ENCODE measurements at regions of chrX and their contacts with region 1.

Region 1: GRCh38 chrX:40108959-40109287 is 11.2 kb upstream of the BCOR start:
- DNase-seq: no peak
- ATAC-seq: peak; percentile 59
- H3K4me3 ChIP-seq: peak overlapping the region; percentile 53 to 76 (median 60); a peak in 5 of 6 replicates
- H3K27ac ChIP-seq: peak overlapping the region; percentile 97
- H3K4me1 ChIP-seq: peaks cover 21% of the 10 kb centered on the region
- H3K27me3 ChIP-seq: no peaks in the 10 kb centered on the region
- CTCF ChIP-seq: no peak
- EP300 ChIP-seq: no peak
- POLR2A ChIP-seq: no peak
- RAD21 ChIP-seq: no peak

Region 2: GRCh38 chrX:40097497-40098263 is 11.2 kb before region 1 on chrX and contains the start of gene BCOR:
- CTCF ChIA-PET with region 1: no interaction called
- POLR2A ChIA-PET with region 1: interaction called, 31 read pairs
- in situ Hi-C with region 1: no loop called
- intact Hi-C with region 1: no loop called
- DNase-seq: no peak
- ATAC-seq: peak; percentile 27
- H3K4me3 ChIP-seq: peak within 1 kb of the TSS; percentile 69 to 75 (median 73)
- H3K27ac ChIP-seq: peak within 1 kb of the TSS; percentile 73
- H3K4me1 ChIP-seq: peaks cover 39% of the 10 kb centered on the region
- H3K27me3 ChIP-seq: no peaks in the 10 kb centered on the region
- CTCF ChIP-seq: no peak
- EP300 ChIP-seq: no peak
- POLR2A ChIP-seq: peak in 1 of 2 experiments; percentile 89; a peak in 2 of 4 replicates
- RAD21 ChIP-seq: peak; percentile 39; the same call in 1 of the 2 replicates
- total RNA-seq, gene BCOR: 15.2 and 18.6 TPM in 2 replicates

Region 3: DNA sequence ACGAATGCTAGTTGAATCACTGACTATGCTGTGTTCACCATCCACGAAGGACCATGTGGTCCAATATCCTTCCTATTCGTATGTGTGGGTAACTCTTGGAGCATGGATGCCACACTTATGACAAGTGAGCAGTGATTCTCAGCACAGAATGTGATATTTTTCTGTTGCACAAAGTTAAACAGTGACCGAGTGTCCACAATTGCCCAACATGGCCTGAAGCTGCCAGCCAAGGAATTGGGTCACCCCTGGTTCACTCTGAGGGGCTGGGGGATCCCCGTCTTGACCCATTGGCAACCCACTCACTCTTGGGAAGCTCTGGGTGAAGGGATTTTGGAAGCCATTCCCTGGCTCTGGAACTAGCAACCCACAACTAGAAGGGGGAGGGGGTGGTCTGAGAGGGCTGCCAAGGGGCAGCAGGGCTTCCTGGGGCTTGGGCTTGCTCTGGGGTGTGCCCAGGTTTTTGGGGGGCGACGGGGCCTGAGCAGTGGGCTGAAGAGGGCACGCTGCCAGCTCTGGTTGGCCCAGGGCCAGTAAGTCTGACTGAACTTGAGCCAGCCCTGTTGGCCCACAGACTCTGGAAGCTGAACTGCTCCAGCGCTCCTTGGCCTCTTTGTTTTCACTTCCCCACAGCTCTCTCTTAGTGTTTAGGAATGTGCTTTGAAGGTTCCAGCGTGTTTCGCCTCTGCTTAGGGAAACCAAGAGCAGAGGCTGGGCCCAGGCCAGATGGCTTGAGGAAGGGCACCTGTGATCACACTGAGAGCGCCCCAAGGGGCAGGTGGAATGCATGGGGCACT is 32.0 kb after region 1 on chrX:
- CTCF ChIA-PET with region 1: no interaction called
- POLR2A ChIA-PET with region 1: interaction called, 17 read pairs
- in situ Hi-C with region 1: no loop called
- intact Hi-C with region 1: loop called (anchors 5 kb)
- DNase-seq: peak; percentile 56
- ATAC-seq: peak; percentile 82
- H3K4me3 ChIP-seq: peak overlapping the region in 1 of 3 experiments; percentile 43; a peak in 1 of 6 replicates
- H3K27ac ChIP-seq: peak overlapping the region; percentile 54
- H3K4me1 ChIP-seq: peaks cover 50% of the 10 kb centered on the region
- H3K27me3 ChIP-seq: no peaks in the 10 kb centered on the region
- CTCF ChIP-seq: no peak
- EP300 ChIP-seq: no peak
- POLR2A ChIP-seq: no peak
- RAD21 ChIP-seq: no peak

Region 4: GRCh38 chrX:40169193-40170101 is 60.5 kb after region 1 on chrX:
- CTCF ChIA-PET with region 1: no interaction called
- POLR2A ChIA-PET with region 1: interaction called, 30 read pairs
- in situ Hi-C with region 1: no loop called
- intact Hi-C with region 1: no loop called
- DNase-seq: peak; percentile 70
- ATAC-seq: peak; percentile 59
- H3K4me3 ChIP-seq: peak overlapping the region; percentile 12 to 30 (median 28); a peak in 5 of 6 replicates
- H3K27ac ChIP-seq: peak overlapping the region; percentile 67
- H3K4me1 ChIP-seq: peaks cover 92% of the 10 kb centered on the region
- H3K27me3 ChIP-seq: no peaks in the 10 kb centered on the region
- CTCF ChIP-seq: peak; percentile 58
- EP300 ChIP-seq: no peak; a peak in 1 of 4 replicates
- POLR2A ChIP-seq: no peak
- RAD21 ChIP-seq: peak; percentile 38; the same call in 1 of the 2 replicates

Region 5: GRCh38 chrX:40175511-40176350 is 66.8 kb after region 1 on chrX:
- CTCF ChIA-PET with region 1: no interaction called
- POLR2A ChIA-PET with region 1: interaction called, 30 read pairs
- in situ Hi-C with region 1: no loop called
- intact Hi-C with region 1: loop called (anchors 2 kb)
- DNase-seq: peak; percentile 47
- ATAC-seq: peak; percentile 39
- H3K4me3 ChIP-seq: peak overlapping the region; percentile 55 to 74 (median 64); a peak in 5 of 6 replicates
- H3K27ac ChIP-seq: peak overlapping the region; percentile 95
- H3K4me1 ChIP-seq: peaks cover 46% of the 10 kb centered on the region
- H3K27me3 ChIP-seq: no peaks in the 10 kb centered on the region
- CTCF ChIP-seq: 0 out of 2 replicates have a peak, but pooled peaks have one; percentile 5
- EP300 ChIP-seq: no peak
- POLR2A ChIP-seq: peak in 1 of 2 experiments; percentile 19; a peak in 2 of 4 replicates
- RAD21 ChIP-seq: no peak

Region 6: GRCh38 chrX:40266490-40267333 is 157.8 kb after region 1 on chrX:
- CTCF ChIA-PET with region 1: no interaction called
- POLR2A ChIA-PET with region 1: interaction called, 3 read pairs
- in situ Hi-C with region 1: no loop called
- intact Hi-C with region 1: loop called (anchors 2 kb)
- DNase-seq: peak; percentile 23
- ATAC-seq: peak; percentile 92
- H3K4me3 ChIP-seq: peak overlapping the region; percentile 45 to 69 (median 60); a peak in 5 of 6 replicates
- H3K27ac ChIP-seq: no peak overlapping the region
- H3K4me1 ChIP-seq: peaks cover 29% of the 10 kb centered on the region
- H3K27me3 ChIP-seq: no peaks in the 10 kb centered on the region; a peak in 1 of 5 replicates
- CTCF ChIP-seq: peak; percentile 83
- EP300 ChIP-seq: no peak
- POLR2A ChIP-seq: no peak
- RAD21 ChIP-seq: peak; percentile 93

Measured in HepG2 (cell line).